GM12878 (cell line): ENCODE measurements at regions of chr3 and their contacts with region 1.

Region 1: GRCh38 chr3:194573691-194574437 is 59.4 kb downstream of the TMEM44 start:
- DNase-seq: no peak
- ATAC-seq: peak; percentile 97
- H3K4me3 ChIP-seq: no peak overlapping the region
- H3K27ac ChIP-seq: no peak overlapping the region
- H3K4me1 ChIP-seq: no peaks in the 10 kb centered on the region; the same call in 1 of the 2 replicates
- H3K27me3 ChIP-seq: no peaks in the 10 kb centered on the region
- CTCF ChIP-seq: peak; percentile 69 to 78 (median 75)
- EP300 ChIP-seq: no peak
- POLR2A ChIP-seq: no peak
- RAD21 ChIP-seq: peak; percentile 83

Region 2: GRCh38 chr3:194465920-194466570 is 107.8 kb before region 1 on chr3:
- CTCF ChIA-PET with region 1: interaction called, 237 read pairs
- POLR2A ChIA-PET with region 1: no interaction called
- RAD21 ChIA-PET with region 1: interaction called, 67 read pairs
- SMC1A ChIA-PET with region 1: interaction called, 110 read pairs
- in situ Hi-C with region 1: no loop called
- intact Hi-C with region 1: no loop called
- DNase-seq: no peak
- ATAC-seq: peak; percentile 74
- H3K4me3 ChIP-seq: no peak overlapping the region
- H3K27ac ChIP-seq: no peak overlapping the region; the same call in 1 of the 2 replicates
- H3K4me1 ChIP-seq: peaks cover 10% of the 10 kb centered on the region
- H3K27me3 ChIP-seq: no peaks in the 10 kb centered on the region
- CTCF ChIP-seq: no peak
- EP300 ChIP-seq: no peak
- POLR2A ChIP-seq: no peak
- RAD21 ChIP-seq: no peak

Region 3: DNA sequence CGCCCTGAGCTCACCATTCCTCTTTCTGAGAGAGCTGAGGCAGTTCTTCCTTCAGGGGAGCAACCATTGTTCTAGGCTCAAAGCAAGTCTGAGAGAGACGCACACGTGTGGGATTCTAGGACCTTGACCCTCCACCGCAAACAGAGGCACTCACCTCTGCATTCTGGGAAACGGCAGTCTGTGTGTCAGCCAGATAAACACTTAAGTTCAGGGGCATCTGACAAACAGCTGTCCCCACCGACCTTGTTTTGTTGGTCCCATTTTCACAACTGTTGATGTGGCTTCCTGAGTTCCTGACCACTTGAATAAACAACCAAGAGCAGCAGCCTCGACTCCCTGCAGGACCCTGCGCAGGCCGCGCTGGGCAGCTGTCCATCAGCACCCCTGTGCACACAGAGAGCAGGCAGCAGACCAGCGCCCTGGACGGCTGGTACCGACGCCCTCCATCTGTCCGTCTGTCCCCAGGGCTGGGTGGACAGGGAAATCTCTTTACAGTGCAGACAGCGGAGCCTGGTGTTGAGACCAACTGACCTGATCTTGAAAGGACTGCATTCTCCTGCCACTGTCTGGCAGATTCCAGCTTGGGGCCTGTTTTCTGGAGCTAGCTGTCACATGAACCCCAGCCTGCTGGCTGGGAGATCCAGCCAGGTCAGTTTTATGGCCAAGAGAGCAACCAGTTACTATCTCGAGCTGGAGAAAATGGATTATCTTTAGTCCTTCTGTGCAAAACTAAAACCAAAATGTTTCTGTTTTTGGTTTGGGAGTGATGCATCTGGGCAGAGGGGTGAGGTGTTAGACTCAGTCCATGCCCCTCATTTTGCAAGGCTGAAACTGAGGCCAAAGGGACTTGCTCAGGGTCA is 176.0 kb after region 1 on chr3:
- CTCF ChIA-PET with region 1: no interaction called
- POLR2A ChIA-PET with region 1: no interaction called
- RAD21 ChIA-PET with region 1: no interaction called
- SMC1A ChIA-PET with region 1: no interaction called
- in situ Hi-C with region 1: no loop called
- intact Hi-C with region 1: no loop called
- DNase-seq: no peak
- ATAC-seq: no peak
- H3K4me3 ChIP-seq: no peak overlapping the region
- H3K27ac ChIP-seq: no peak overlapping the region
- H3K4me1 ChIP-seq: no peaks in the 10 kb centered on the region
- H3K27me3 ChIP-seq: peaks cover 0 to 2% of the 10 kb centered on the region in 2 experiments; a peak in 2 of 4 replicates
- CTCF ChIP-seq: no peak
- EP300 ChIP-seq: no peak
- POLR2A ChIP-seq: no peak
- RAD21 ChIP-seq: no peak